Heart right ventricle (tissue), 16 donors: ENCODE measurements at regions of chr9 and their contacts with region 1.

Region 1: DNA sequence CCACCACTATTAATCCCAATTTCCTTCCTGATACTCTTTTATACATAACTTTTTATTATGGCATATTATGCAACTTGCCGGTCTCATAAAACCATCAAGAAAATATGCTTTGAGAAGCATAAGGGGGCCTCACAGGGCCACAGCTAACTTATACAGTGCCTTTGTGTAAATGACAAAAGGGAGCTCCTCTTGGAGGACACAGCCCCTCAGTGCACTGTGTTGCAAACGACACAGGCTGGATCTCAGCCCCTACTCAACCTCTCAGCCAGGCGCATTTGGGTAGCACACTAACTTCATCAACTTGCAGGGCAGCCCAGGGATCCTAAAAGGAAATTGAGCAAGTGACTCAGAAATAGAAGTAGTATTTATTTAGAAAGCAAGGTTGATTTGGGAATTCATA is 35.4 kb downstream of the RIGI start:
- DNase-seq: no peak
- ATAC-seq: no peak
- H3K4me3 ChIP-seq: no peak overlapping the region
- H3K27ac ChIP-seq: no peak overlapping the region
- H3K4me1 ChIP-seq: no peaks in the 10 kb centered on the region
- H3K27me3 ChIP-seq: no peaks in the 10 kb centered on the region
- CTCF ChIP-seq: no peak

Region 2: GRCh38 chr9:32431940-32432555 is 58.6 kb before region 1 on chr9:
- intact Hi-C with region 1: loop called in 1 of 10 experiments (anchors 10 kb)
- DNase-seq: peak; percentile 23 to 28
- ATAC-seq: peak in 6 of 8 donors; percentile 55 to 71 (median 63)
- H3K4me3 ChIP-seq: no peak overlapping the region
- H3K27ac ChIP-seq: no peak overlapping the region
- H3K4me1 ChIP-seq: peaks cover 0 to 3% (median 0%) of the 10 kb centered on the region in 9 donors
- H3K27me3 ChIP-seq: no peaks in the 10 kb centered on the region
- CTCF ChIP-seq: peak; percentile 8 to 70 (median 58)